Right lobe of liver (tissue), 6 donors: ENCODE measurements at regions of chr1 and their contacts with region 1.

Region 1: DNA sequence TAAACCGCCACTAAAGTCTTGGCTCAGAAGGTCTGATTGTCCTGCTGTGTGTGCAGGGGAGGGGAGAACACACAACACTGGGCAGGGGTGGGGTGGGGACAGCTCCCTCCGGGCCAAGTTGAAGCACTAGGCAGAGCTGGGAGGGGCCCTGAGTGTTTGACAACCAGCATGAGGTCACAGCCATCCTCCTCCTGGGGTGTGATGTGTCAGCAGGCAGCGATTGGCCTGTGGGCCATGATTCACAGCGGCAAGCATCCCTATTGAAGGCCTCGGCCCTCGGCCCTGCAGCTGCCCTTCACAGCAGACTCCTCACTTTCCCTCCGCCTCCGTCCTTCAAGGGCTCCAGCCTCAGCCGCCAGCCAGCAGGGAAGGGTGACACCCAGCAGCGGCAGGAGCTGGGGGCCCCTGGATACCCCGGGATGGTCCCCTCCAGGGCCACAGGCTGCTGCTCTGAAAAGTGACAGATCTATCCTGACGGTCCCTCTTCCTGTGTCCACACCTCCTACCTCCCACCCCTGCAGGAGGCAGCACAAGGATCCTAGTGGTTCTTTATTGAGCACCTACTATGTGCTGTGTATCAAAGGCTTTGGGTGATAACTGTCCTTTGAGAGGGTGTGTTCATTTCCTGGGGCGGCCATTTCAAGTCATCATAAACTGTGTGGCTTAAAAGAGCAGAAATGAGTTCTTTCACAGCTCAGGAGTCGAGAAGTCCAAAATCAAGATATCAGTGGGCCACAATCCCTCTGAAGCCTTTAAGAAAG is 66.1 kb upstream of the SLC25A33 start:
- DNase-seq: no peak
- ATAC-seq: peak in 1 of 4 donors; percentile 12
- H3K4me3 ChIP-seq: no peak overlapping the region
- H3K27ac ChIP-seq: no peak overlapping the region
- H3K4me1 ChIP-seq: no peaks in the 10 kb centered on the region
- H3K27me3 ChIP-seq: no peaks in the 10 kb centered on the region
- CTCF ChIP-seq: no peak
- POLR2A ChIP-seq: no peak

Region 2: DNA sequence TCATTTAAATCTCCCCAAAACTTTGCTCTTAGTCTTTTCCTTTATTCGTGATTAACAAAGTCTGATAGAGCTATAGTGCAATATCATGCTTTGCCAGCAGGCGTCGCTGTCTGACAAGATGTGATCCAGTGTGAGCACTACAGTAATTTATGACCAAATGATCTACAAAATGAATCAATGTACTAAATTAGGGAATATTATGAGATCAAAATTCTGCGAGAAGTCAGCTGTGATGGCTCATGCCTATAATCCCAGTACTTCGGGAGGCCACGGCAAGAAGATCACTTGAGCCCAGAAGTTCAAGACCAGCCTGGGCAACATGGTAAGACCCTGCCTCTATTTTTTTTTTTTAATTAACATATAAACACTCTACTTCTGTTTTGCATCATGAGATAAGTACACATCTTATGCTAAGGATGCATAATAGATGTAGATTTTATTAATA is 184.1 kb before region 1 on chr1:
- intact Hi-C with region 1: loop called in 1 of 2 experiments (anchors 10 kb)
- DNase-seq: peak in 2 of 3 donors; percentile 69 to 73
- ATAC-seq: peak in 2 of 4 donors; percentile 5 to 24
- H3K4me3 ChIP-seq: no peak overlapping the region
- H3K27ac ChIP-seq: peak overlapping the region in 1 of 3 donors; percentile 21
- H3K4me1 ChIP-seq: peaks cover 0 to 31% (median 6%) of the 10 kb centered on the region in 4 donors
- H3K27me3 ChIP-seq: no peaks in the 10 kb centered on the region
- CTCF ChIP-seq: peak; percentile 82 to 98 (median 92)
- POLR2A ChIP-seq: no peak